ENCODE measurements at regions of chr22 and their contacts with region 1.

Region 1: GRCh38 chr22:28051787-28052356 is 132.8 kb upstream of the PITPNB start:
- DNase-seq: peak; percentile 76
- ATAC-seq: peak; percentile 73

Region 2: GRCh38 chr22:28034760-28035401 is 17.0 kb before region 1 on chr22:
- intact Hi-C with region 1: no loop called
- DNase-seq: peak; percentile 79
- ATAC-seq: peak; percentile 88

Region 3: GRCh38 chr22:28142361-28142961 is 90.6 kb after region 1 on chr22:
- intact Hi-C with region 1: no loop called
- DNase-seq: no peak
- ATAC-seq: peak; percentile 69

Region 4: GRCh38 chr22:28594797-28595462 is 543.1 kb after region 1 on chr22:
- intact Hi-C with region 1: loop called (anchors 1 kb)
- DNase-seq: no peak
- ATAC-seq: peak; percentile 88

Region 5: GRCh38 chr22:28829358-28830181 is 777.7 kb after region 1 on chr22:
- intact Hi-C with region 1: loop called (anchors 10 kb)
- DNase-seq: peak; percentile 88
- ATAC-seq: peak; percentile 87